GM12878 (cell line): ENCODE measurements at regions of chr6 and their contacts with region 1.

Region 1: GRCh38 chr6:83514866-83515466 is 2.6 kb downstream of the PRSS35 start:
- DNase-seq: peak; percentile 30
- ATAC-seq: peak; percentile 74
- H3K4me3 ChIP-seq: no peak overlapping the region
- H3K27ac ChIP-seq: no peak overlapping the region
- H3K4me1 ChIP-seq: no peaks in the 10 kb centered on the region
- H3K27me3 ChIP-seq: no peaks in the 10 kb centered on the region; a peak in 1 of 4 replicates
- CTCF ChIP-seq: peak; percentile 72 to 82 (median 76)
- EP300 ChIP-seq: no peak
- POLR2A ChIP-seq: no peak
- RAD21 ChIP-seq: peak; percentile 96

Region 2: GRCh38 chr6:83417880-83418663 is 96.9 kb before region 1 on chr6:
- CTCF ChIA-PET with region 1: interaction called, 66 read pairs
- POLR2A ChIA-PET with region 1: no interaction called
- RAD21 ChIA-PET with region 1: interaction called, 8 read pairs
- SMC1A ChIA-PET with region 1: interaction called, 56 read pairs
- in situ Hi-C with region 1: no loop called
- intact Hi-C with region 1: loop called (anchors 1 kb)
- DNase-seq: no peak
- ATAC-seq: peak; percentile 76
- H3K4me3 ChIP-seq: no peak overlapping the region
- H3K27ac ChIP-seq: no peak overlapping the region
- H3K4me1 ChIP-seq: no peaks in the 10 kb centered on the region
- H3K27me3 ChIP-seq: no peaks in the 10 kb centered on the region
- CTCF ChIP-seq: peak; percentile 38 to 44 (median 40); a peak in 4 of 6 replicates
- EP300 ChIP-seq: no peak
- POLR2A ChIP-seq: no peak
- RAD21 ChIP-seq: peak; percentile 58

Region 3: GRCh38 chr6:83536034-83536646 is 21.2 kb after region 1 on chr6:
- CTCF ChIA-PET with region 1: interaction called, 17 read pairs
- POLR2A ChIA-PET with region 1: no interaction called
- RAD21 ChIA-PET with region 1: no interaction called
- SMC1A ChIA-PET with region 1: interaction called, 3 read pairs
- in situ Hi-C with region 1: no loop called
- intact Hi-C with region 1: no loop called
- DNase-seq: peak; percentile 8
- ATAC-seq: peak; percentile 86
- H3K4me3 ChIP-seq: no peak overlapping the region
- H3K27ac ChIP-seq: no peak overlapping the region
- H3K4me1 ChIP-seq: no peaks in the 10 kb centered on the region
- H3K27me3 ChIP-seq: no peaks in the 10 kb centered on the region
- CTCF ChIP-seq: peak; percentile 71 to 89 (median 87)
- EP300 ChIP-seq: no peak
- POLR2A ChIP-seq: no peak
- RAD21 ChIP-seq: peak; percentile 53

Region 4: GRCh38 chr6:83605517-83605916 is 90.6 kb after region 1 on chr6:
- CTCF ChIA-PET with region 1: no interaction called
- POLR2A ChIA-PET with region 1: no interaction called
- RAD21 ChIA-PET with region 1: no interaction called
- SMC1A ChIA-PET with region 1: no interaction called
- in situ Hi-C with region 1: no loop called
- intact Hi-C with region 1: no loop called
- DNase-seq: no peak
- ATAC-seq: no peak
- H3K4me3 ChIP-seq: no peak overlapping the region
- H3K27ac ChIP-seq: no peak overlapping the region
- H3K4me1 ChIP-seq: no peaks in the 10 kb centered on the region
- H3K27me3 ChIP-seq: no peaks in the 10 kb centered on the region
- CTCF ChIP-seq: no peak
- EP300 ChIP-seq: no peak
- POLR2A ChIP-seq: no peak
- RAD21 ChIP-seq: no peak

Region 5: DNA sequence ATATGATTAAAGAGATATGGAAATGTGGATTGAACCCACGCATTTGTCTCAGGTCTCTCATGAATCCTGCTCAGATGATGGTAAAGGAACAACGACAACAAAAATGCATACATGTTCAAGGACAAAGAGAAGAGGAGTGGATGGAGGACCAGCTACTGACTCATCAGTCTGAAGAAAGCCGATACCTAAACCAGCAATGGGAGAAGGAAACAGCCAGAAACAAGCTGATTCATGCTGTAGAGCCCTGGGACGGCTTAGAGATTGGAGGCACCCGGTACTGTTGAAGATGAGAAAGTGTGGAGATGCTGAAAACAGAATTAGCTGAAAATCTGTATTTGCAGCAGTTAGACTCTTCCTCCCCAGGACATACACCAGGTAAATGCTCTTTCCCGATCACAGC is 323.8 kb after region 1 on chr6:
- CTCF ChIA-PET with region 1: no interaction called
- POLR2A ChIA-PET with region 1: no interaction called
- RAD21 ChIA-PET with region 1: no interaction called
- SMC1A ChIA-PET with region 1: no interaction called
- in situ Hi-C with region 1: no loop called
- intact Hi-C with region 1: no loop called
- DNase-seq: no peak
- ATAC-seq: no peak
- H3K4me3 ChIP-seq: no peak overlapping the region
- H3K27ac ChIP-seq: no peak overlapping the region
- H3K4me1 ChIP-seq: no peaks in the 10 kb centered on the region
- H3K27me3 ChIP-seq: no peaks in the 10 kb centered on the region
- CTCF ChIP-seq: no peak
- EP300 ChIP-seq: no peak
- POLR2A ChIP-seq: no peak
- RAD21 ChIP-seq: no peak